ENCODE measurements at regions of chr4 and their contacts with region 1.

Region 1: DNA sequence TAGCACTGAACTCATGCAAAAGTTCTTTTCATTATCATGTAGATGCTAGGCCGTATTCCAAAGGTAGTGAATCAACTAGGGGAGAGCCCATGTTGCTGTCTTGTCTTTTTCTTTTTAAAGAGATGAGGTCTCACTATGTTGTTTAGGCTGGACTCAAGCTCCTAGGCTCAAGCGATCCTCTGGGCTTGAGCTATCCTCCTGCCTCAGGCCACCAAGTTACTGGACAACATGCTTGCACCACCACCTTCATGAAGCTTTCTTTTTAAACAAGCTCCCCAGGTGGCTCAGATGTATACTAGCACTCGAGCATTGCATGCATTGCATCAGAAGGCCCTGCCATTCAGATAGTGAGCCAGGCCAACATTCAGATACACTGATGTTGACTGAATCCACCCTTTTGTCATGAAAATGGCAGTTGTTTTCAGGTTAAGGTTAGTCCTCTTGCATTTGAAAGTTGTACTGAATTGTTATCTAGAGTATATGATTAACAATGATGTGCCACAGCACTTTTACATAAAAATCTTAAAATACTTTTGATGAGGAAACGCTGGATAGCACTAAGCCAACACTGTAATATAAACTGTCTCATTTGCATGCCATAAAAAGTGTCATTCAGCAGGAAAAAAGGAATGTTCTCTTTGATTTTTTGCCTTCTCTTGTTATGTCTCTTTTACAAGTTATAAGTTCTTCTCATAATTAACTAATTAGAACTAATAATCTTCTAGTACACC is 76.7 kb downstream of the FNIP2 start:
- DNase-seq: no peak
- ATAC-seq: no peak
- H3K4me3 ChIP-seq: no peak overlapping the region
- H3K4me3 Mint-ChIP-seq: no peak overlapping the region
- H3K27ac ChIP-seq: no peak overlapping the region
- H3K27ac Mint-ChIP-seq: no peak overlapping the region
- H3K4me1 ChIP-seq: no peaks in the 10 kb centered on the region
- H3K4me1 Mint-ChIP-seq: no peaks in the 10 kb centered on the region
- H3K27me3 ChIP-seq: peaks cover 0 to 28% (median 17%) of the 10 kb centered on the region in 4 experiments
- H3K27me3 Mint-ChIP-seq: peaks cover 38% of the 10 kb centered on the region
- CTCF ChIP-seq: no peak

Region 2: GRCh38 chr4:158856852-158857251 is 11.4 kb after region 1 on chr4:
- CTCF ChIA-PET with region 1: interaction called, 32 read pairs
- POLR2A ChIA-PET with region 1: no interaction called
- intact Hi-C with region 1: no loop called
- DNase-seq: peak; percentile 63
- ATAC-seq: peak; percentile 65
- H3K4me3 ChIP-seq: no peak overlapping the region
- H3K4me3 Mint-ChIP-seq: no peak overlapping the region
- H3K27ac ChIP-seq: no peak overlapping the region
- H3K27ac Mint-ChIP-seq: no peak overlapping the region
- H3K4me1 ChIP-seq: no peaks in the 10 kb centered on the region
- H3K4me1 Mint-ChIP-seq: peaks cover 3% of the 10 kb centered on the region
- H3K27me3 ChIP-seq: peaks cover 0 to 4% (median 3%) of the 10 kb centered on the region in 4 experiments
- H3K27me3 Mint-ChIP-seq: peaks cover 13% of the 10 kb centered on the region
- CTCF ChIP-seq: peak; percentile 76